Activated CD4-positive, alpha-beta T cell treated with anti-CD3 and anti-CD28 coated beads for 36 hours (primary cell): ENCODE measurements at regions of chr13 and their contacts with region 1.

Region 1: GRCh38 chr13:25375727-25376358 is 4.1 kb downstream of the ATP8A2 start:
- DNase-seq: peak; percentile 48
- ATAC-seq: no peak
- H3K4me3 Mint-ChIP-seq: no peak overlapping the region
- H3K27ac Mint-ChIP-seq: no peak overlapping the region
- H3K4me1 Mint-ChIP-seq: peaks cover 6% of the 10 kb centered on the region
- H3K27me3 Mint-ChIP-seq: peaks cover 49% of the 10 kb centered on the region

Region 2: DNA sequence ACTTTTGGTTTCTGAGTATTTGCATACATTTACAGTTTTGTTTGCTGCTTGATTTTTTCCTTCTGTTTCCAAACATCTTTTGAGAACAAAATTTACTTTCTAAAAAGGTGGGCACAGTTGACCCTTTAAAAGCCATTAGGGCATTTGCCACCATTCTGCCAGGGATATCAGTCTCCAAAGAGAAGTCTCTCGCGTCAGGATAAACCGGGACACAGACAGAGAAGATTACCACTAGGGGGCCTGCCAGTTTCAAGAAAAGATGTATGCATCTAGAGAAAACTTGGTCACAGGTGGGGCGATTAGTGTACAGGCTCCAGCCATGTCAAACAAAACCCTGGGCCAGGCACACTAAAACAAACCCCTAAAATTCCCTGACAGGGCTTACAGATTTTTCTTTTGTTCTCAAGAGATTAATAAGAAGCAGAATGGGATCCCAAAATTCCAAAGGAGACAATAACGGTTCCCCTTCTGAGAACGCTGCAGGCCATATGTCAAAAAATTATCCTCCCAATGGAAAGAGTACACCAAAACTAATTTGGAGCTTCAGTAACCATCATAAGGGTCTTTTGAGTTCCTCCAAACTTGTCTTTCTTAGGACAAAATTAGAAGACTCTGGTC is 290.6 kb before region 1 on chr13:
- CTCF ChIA-PET with region 1: interaction called, 3 read pairs
- POLR2A ChIA-PET with region 1: no interaction called
- intact Hi-C with region 1: loop called in 1 of 2 experiments (anchors 2 kb)
- DNase-seq: peak; percentile 35
- ATAC-seq: no peak
- H3K4me3 Mint-ChIP-seq: no peak overlapping the region
- H3K27ac Mint-ChIP-seq: no peak overlapping the region
- H3K4me1 Mint-ChIP-seq: no peaks in the 10 kb centered on the region
- H3K27me3 Mint-ChIP-seq: peaks cover 2% of the 10 kb centered on the region

Region 3: GRCh38 chr13:25232937-25233515 is 142.8 kb before region 1 on chr13:
- CTCF ChIA-PET with region 1: interaction called, 10 read pairs
- POLR2A ChIA-PET with region 1: no interaction called
- intact Hi-C with region 1: loop called (anchors 1 to 2 kb)
- DNase-seq: no peak
- ATAC-seq: peak; percentile 42
- H3K4me3 Mint-ChIP-seq: no peak overlapping the region
- H3K27ac Mint-ChIP-seq: no peak overlapping the region
- H3K4me1 Mint-ChIP-seq: peaks cover 3% of the 10 kb centered on the region
- H3K27me3 Mint-ChIP-seq: peaks cover 4% of the 10 kb centered on the region

Region 4: DNA sequence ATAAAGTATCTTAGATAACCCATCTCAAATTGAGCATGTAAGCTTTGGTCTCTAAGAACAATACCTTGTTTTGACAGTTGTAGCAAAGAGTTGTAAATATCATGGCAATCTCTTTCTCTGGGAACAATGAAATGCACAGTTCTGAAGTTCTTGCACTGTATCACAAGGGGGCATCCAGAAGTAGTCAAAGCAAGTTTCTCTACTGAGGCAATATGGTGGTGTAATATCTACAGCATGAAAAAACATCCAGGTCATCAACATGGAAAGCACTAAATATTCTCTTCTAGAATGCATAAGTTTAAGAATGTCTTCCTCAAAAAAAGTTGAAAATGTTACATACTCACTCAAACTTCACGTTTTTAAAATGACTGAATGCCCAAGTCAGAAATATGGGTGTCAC is 108.1 kb before region 1 on chr13:
- CTCF ChIA-PET with region 1: interaction called, 4 read pairs
- POLR2A ChIA-PET with region 1: no interaction called
- intact Hi-C with region 1: loop called in 1 of 2 experiments (anchors 2 kb)
- DNase-seq: no peak
- ATAC-seq: peak; percentile 84
- H3K4me3 Mint-ChIP-seq: no peak overlapping the region
- H3K27ac Mint-ChIP-seq: no peak overlapping the region
- H3K4me1 Mint-ChIP-seq: no peaks in the 10 kb centered on the region
- H3K27me3 Mint-ChIP-seq: no peaks in the 10 kb centered on the region

Region 5: GRCh38 chr13:25415241-25415640 is 39.4 kb after region 1 on chr13:
- CTCF ChIA-PET with region 1: no interaction called
- POLR2A ChIA-PET with region 1: no interaction called
- intact Hi-C with region 1: no loop called
- DNase-seq: no peak
- ATAC-seq: no peak
- H3K4me3 Mint-ChIP-seq: no peak overlapping the region
- H3K27ac Mint-ChIP-seq: no peak overlapping the region
- H3K4me1 Mint-ChIP-seq: no peaks in the 10 kb centered on the region
- H3K27me3 Mint-ChIP-seq: peaks cover 24% of the 10 kb centered on the region